Naive thymus-derived CD4-positive, alpha-beta T cell (primary cell): ENCODE measurements at regions of chr6 and their contacts with region 1.

Region 1: DNA sequence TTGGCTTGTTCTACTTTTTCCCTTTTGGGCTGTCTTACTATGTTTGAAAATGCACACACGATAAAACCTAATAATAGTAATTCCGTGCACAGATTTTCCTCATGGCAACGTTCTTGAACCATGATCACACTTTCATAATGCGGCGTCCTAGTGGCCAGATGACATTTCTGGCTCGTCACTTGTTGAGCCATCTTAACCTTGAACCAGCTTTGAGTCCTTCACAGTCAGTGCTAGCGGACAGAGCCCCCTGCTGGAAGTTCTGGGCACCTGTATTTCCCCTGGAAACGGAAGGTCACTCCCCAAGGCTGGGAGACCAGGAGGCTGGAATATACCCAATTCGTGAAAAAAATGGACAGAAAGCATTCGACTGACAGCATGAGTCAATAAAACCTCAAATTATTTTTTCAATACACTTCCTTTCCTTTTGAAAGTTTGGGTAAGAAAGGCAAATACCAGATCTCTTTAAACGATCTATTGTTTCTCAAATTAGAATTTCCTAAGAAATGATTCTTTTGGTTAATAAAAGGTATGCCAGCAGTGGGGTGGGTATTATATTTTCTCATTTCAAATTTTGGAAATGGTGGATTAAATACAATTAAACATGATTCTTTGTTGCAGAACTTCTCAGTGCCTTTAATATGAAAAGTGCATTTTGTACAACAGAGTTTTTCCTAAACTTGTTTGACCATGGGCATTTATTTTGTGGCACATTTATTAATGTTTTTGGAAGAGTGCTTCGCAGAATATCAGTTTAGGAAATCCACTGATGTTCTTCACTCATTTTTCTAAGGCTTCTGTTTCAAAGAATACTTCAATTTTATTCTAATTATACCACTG is 542.3 kb downstream of the QKI start:
- DNase-seq: peak; percentile 5 to 50 (median 29)
- ATAC-seq: peak; percentile 78
- H3K4me3 ChIP-seq: no peak overlapping the region
- H3K4me3 Mint-ChIP-seq: no peak overlapping the region
- H3K27ac ChIP-seq: no peak overlapping the region
- H3K27ac Mint-ChIP-seq: no peak overlapping the region
- H3K4me1 ChIP-seq: no peaks in the 10 kb centered on the region
- H3K4me1 Mint-ChIP-seq: peaks cover 0 to 4% (median 0%) of the 10 kb centered on the region in 7 donors
- H3K27me3 ChIP-seq: no peaks in the 10 kb centered on the region
- H3K27me3 Mint-ChIP-seq: peaks cover 18 to 42% (median 27%) of the 10 kb centered on the region in 5 donors

Region 2: DNA sequence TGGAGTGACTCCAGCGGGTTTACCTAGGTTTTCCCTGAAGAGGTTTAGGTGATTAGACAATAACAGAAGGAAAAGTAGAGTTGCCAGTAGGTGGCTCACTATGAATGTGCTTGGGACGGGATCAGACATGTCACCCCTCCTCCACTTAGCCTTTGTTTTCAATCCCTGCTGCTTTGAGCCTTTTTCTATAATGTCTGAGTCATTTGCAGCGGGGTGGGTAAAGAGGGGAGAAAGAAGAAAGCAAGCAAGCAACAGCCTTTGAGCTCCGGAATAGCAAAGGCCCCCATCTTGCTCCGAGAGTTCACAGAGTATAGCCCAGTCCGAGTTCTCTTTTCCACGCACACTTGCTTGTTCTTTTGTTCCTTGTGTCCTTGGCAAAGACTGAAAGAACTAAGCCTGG is 1099.9 kb before region 1 on chr6:
- CTCF ChIA-PET with region 1: no interaction called
- POLR2A ChIA-PET with region 1: no interaction called
- intact Hi-C with region 1: loop called in 1 of 2 experiments (anchors 5 kb)
- DNase-seq: no peak
- ATAC-seq: no peak
- H3K4me3 ChIP-seq: no peak overlapping the region
- H3K4me3 Mint-ChIP-seq: no peak overlapping the region
- H3K27ac ChIP-seq: no peak overlapping the region
- H3K27ac Mint-ChIP-seq: no peak overlapping the region
- H3K4me1 ChIP-seq: no peaks in the 10 kb centered on the region
- H3K4me1 Mint-ChIP-seq: no peaks in the 10 kb centered on the region
- H3K27me3 ChIP-seq: no peaks in the 10 kb centered on the region
- H3K27me3 Mint-ChIP-seq: peaks cover 0 to 19% (median 0%) of the 10 kb centered on the region in 5 donors

Region 3: GRCh38 chr6:163338671-163339405 is 618.0 kb before region 1 on chr6:
- CTCF ChIA-PET with region 1: no interaction called
- POLR2A ChIA-PET with region 1: no interaction called
- intact Hi-C with region 1: no loop called
- DNase-seq: no peak
- ATAC-seq: no peak
- H3K4me3 ChIP-seq: no peak overlapping the region
- H3K4me3 Mint-ChIP-seq: no peak overlapping the region
- H3K27ac ChIP-seq: no peak overlapping the region
- H3K27ac Mint-ChIP-seq: no peak overlapping the region
- H3K4me1 ChIP-seq: no peaks in the 10 kb centered on the region
- H3K4me1 Mint-ChIP-seq: peaks cover 0 to 6% (median 0%) of the 10 kb centered on the region in 7 donors
- H3K27me3 ChIP-seq: no peaks in the 10 kb centered on the region
- H3K27me3 Mint-ChIP-seq: peaks cover under 1 to 32% (median 19%) of the 10 kb centered on the region in 5 donors

Region 4: GRCh38 chr6:163427498-163428254 is 529.1 kb before region 1 on chr6:
- CTCF ChIA-PET with region 1: interaction called, 7 read pairs
- POLR2A ChIA-PET with region 1: no interaction called
- intact Hi-C with region 1: loop called in 1 of 2 experiments (anchors 1 kb)
- DNase-seq: peak in 5 of 9 donors; percentile 20 to 36 (median 26)
- ATAC-seq: peak; percentile 38
- H3K4me3 ChIP-seq: no peak overlapping the region
- H3K4me3 Mint-ChIP-seq: no peak overlapping the region
- H3K27ac ChIP-seq: no peak overlapping the region
- H3K27ac Mint-ChIP-seq: no peak overlapping the region
- H3K4me1 ChIP-seq: no peaks in the 10 kb centered on the region
- H3K4me1 Mint-ChIP-seq: peaks cover 20 to 74% (median 62%) of the 10 kb centered on the region in 7 donors
- H3K27me3 ChIP-seq: no peaks in the 10 kb centered on the region
- H3K27me3 Mint-ChIP-seq: no peaks in the 10 kb centered on the region

Region 5: DNA sequence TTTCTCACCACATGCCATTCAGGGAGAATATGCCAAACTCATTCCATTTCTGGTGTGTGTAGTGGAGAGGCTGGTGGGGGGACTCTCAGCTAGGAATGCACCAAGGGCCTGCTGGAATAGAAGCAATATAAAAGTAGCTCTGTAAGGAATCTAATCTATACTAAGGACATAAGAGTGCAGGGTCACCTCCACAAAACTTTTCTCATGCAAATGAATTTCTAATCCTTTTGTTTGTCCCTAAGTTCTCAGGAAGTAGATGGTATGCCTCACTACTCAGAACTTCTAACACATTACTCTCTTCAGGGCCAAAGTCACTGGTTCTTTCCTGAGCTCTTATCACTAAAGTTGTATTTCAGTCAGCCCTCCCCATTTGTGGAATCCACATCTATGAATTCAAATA is 925.4 kb after region 1 on chr6:
- CTCF ChIA-PET with region 1: no interaction called
- POLR2A ChIA-PET with region 1: no interaction called
- intact Hi-C with region 1: no loop called
- DNase-seq: no peak
- ATAC-seq: no peak
- H3K4me3 ChIP-seq: no peak overlapping the region
- H3K4me3 Mint-ChIP-seq: no peak overlapping the region
- H3K27ac ChIP-seq: no peak overlapping the region
- H3K27ac Mint-ChIP-seq: no peak overlapping the region
- H3K4me1 ChIP-seq: no peaks in the 10 kb centered on the region
- H3K4me1 Mint-ChIP-seq: no peaks in the 10 kb centered on the region
- H3K27me3 ChIP-seq: no peaks in the 10 kb centered on the region
- H3K27me3 Mint-ChIP-seq: no peaks in the 10 kb centered on the region